CD14-positive monocyte (primary cell): ENCODE measurements at regions of chr15 and their contacts with region 1.

Region 1: GRCh38 chr15:74937596-74938296 is at the start of gene COX5A:
- DNase-seq: peak; percentile 91 to 96 (median 94)
- H3K4me3 ChIP-seq: peak within 1 kb of the TSS; percentile 69 to 92 (median 81)
- H3K4me3 Mint-ChIP-seq: peak within 1 kb of the TSS; percentile 78 to 92
- H3K27ac ChIP-seq: peak within 1 kb of the TSS; percentile 77 to 88
- H3K27ac Mint-ChIP-seq: peak within 1 kb of the TSS; percentile 82 to 94 (median 91)
- H3K4me1 ChIP-seq: peaks cover 16 to 29% of the 10 kb centered on the region in 2 donors
- H3K4me1 Mint-ChIP-seq: peaks cover 26% of the 10 kb centered on the region
- H3K27me3 ChIP-seq: no peaks in the 10 kb centered on the region
- H3K27me3 Mint-ChIP-seq: peaks cover 0 to 1% (median 1%) of the 10 kb centered on the region in 3 donors
- CTCF ChIP-seq: no peak
- polyA plus RNA-seq, gene COX5A: 127 to 498 (median 434) TPM

Region 2: DNA sequence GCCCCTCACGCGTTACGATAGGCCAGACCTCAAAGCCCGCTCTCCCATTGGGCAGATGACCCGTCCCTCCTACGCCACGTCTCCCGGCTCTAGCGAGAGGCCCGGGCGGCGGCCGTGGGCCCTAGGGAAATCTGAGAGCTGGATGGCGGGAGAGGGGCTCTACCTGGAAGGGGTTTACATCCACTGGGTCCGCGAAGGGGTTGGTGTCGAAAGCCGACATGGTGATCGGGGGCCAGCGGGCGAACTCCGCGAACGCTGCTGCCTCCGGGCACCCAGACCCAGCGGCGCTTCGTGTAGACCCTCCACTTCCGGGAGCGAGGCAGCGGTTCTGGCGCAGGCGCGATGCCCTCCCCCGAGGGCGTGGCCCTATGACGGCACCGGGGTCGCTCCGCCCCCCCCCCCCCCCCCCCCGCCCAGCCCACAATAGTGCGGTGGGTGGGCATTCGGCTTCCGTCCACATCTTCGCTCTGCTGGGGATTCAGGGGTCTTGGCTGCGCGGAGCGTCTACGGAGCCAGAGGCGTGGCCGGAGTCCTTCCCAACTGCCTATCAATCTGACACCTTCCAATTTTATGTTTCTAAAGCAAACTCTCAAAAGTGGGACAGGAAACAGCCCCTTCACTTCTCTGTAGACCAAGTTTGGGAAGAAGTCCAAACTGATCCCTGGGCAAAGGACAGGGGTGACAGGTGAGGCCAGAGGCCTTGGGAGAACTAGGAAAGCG is 64.5 kb before region 1 on chr15 and contains the start of gene SCAMP2:
- intact Hi-C with region 1: loop called in 1 of 2 experiments (anchors 2 kb)
- DNase-seq: peak; percentile 84 to 87 (median 85)
- H3K4me3 ChIP-seq: peak within 1 kb of the TSS; percentile 76 to 82 (median 77)
- H3K4me3 Mint-ChIP-seq: peak within 1 kb of the TSS; percentile 89 to 95
- H3K27ac ChIP-seq: peak within 1 kb of the TSS; percentile 83 to 98
- H3K27ac Mint-ChIP-seq: peak within 1 kb of the TSS; percentile 95 to 99 (median 98)
- H3K4me1 ChIP-seq: peaks cover 51 to 56% of the 10 kb centered on the region in 2 donors
- H3K4me1 Mint-ChIP-seq: peaks cover 50% of the 10 kb centered on the region
- H3K27me3 ChIP-seq: no peaks in the 10 kb centered on the region
- H3K27me3 Mint-ChIP-seq: peaks cover 1 to 4% (median 1%) of the 10 kb centered on the region in 3 donors
- CTCF ChIP-seq: no peak
- polyA plus RNA-seq, gene SCAMP2: 124 to 158 (median 124) TPM